Right cardiac atrium (tissue), 5 donors: ENCODE measurements at regions of chr1 and their contacts with region 1.

Region 1: GRCh38 chr1:183859831-183860230 is 54.9 kb downstream of the RGL1 start:
- DNase-seq: no peak
- ATAC-seq: no peak
- H3K4me3 ChIP-seq: no peak overlapping the region
- H3K27ac ChIP-seq: no peak overlapping the region
- H3K4me1 ChIP-seq: peaks cover 8% of the 10 kb centered on the region
- H3K27me3 ChIP-seq: no peaks in the 10 kb centered on the region

Region 2: DNA sequence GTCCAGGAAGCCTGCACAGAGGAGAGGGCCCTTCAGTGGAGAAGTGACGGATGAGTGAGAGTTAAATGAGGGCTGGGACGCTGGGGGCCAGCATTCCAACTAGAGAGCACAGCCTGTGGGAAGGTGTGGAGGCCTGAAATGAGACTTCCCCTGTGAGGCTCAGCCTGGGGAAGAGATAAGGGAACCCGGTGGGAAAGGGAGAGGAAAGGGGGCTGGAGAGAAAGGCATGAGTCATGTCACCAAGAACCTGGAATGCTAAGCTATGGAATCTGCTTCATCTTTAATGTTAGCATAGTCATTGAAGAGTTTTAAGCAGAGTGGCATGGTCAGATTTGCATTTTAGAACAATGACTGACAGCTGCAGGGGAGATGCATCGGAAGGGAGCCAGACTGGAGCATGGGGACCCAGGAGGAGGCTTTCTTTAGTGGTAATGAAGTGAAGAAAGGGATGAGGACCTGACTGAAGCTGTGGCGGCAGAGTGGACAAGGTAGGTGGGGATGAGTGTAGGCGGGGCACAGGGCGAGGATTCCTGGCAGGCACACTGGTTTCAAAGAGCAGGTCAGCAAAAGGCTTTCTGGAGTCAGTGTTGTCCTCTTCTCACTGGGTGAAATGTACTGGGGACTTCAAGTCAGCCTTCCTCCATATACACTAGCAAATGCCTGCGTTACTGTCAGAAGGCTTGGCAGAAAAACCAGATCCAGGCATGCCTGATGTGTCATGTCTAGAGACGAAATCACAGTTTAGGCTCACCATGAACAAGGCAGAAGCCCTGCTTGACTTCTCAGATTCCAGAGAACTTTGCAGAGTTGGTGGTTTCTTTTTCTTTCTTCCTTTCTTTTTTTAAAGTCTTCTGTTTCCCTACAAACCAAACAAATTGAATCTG is 46.9 kb before region 1 on chr1:
- intact Hi-C with region 1: loop called in 1 of 4 experiments (anchors 10 kb)
- DNase-seq: no peak
- ATAC-seq: peak; percentile 20 to 67
- H3K4me3 ChIP-seq: no peak overlapping the region
- H3K27ac ChIP-seq: peak overlapping the region; percentile 50
- H3K4me1 ChIP-seq: peaks cover 19% of the 10 kb centered on the region
- H3K27me3 ChIP-seq: no peaks in the 10 kb centered on the region

Region 3: DNA sequence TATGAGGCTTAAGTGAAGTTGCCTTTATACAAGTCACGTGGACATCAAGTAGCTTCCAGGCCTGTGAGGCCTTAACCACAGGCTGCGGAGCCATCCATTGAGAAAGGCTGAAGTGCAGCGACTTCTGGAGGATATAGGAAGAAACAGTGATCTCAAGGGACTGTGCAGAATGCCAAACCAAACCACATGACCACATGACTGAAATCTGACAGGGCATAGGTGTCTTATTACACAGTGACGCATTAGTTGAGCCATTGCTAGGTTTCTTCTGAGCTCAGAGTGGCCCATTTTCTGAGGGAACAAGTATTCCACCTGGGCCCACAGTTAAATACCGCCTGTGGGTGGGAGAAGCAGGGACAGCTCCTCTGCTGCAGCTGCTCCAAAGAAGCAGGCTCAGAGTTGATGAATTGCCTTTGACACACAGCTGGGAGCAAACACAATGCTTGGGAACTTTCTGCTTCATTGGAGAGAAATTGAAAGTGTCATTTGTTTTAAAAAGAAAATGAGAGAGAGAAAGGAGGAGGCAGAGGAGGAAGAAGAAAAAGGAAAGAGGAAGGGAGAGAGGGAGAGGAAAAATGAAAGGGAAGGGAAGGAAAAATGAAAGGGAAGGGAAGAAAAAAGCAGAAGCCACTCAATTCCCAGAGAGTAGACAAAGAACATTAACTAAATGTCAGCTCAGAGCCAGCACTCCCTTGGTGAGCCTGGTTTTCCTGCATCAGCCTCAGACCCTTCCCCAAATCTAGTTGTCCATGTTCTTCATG is 83.3 kb after region 1 on chr1:
- intact Hi-C with region 1: no loop called
- DNase-seq: no peak
- ATAC-seq: no peak
- H3K4me3 ChIP-seq: no peak overlapping the region
- H3K27ac ChIP-seq: peak overlapping the region; percentile 27
- H3K4me1 ChIP-seq: no peaks in the 10 kb centered on the region
- H3K27me3 ChIP-seq: no peaks in the 10 kb centered on the region